RWPE1 (cell line): ENCODE measurements at regions of chr9 and their contacts with region 1.

Region 1: GRCh38 chr9:136363606-136364370 is at the start of gene DNLZ:
- DNase-seq: peak; percentile 94
- H3K27ac ChIP-seq: peak within 1 kb of the TSS; percentile 88
- CTCF ChIP-seq: peak; percentile 100

Region 2: GRCh38 chr9:136312436-136312835 is 51.4 kb before region 1 on chr9:
- CTCF ChIA-PET with region 1: interaction called, 12 read pairs
- POLR2A ChIA-PET with region 1: no interaction called
- DNase-seq: peak; percentile 90
- H3K27ac ChIP-seq: no peak overlapping the region
- CTCF ChIP-seq: peak; percentile 81

Region 3: GRCh38 chr9:136339173-136339957 is 24.4 kb before region 1 on chr9:
- CTCF ChIA-PET with region 1: interaction called, 17 read pairs
- POLR2A ChIA-PET with region 1: interaction called, 12 read pairs
- DNase-seq: peak; percentile 84
- H3K27ac ChIP-seq: peak overlapping the region; percentile 23
- CTCF ChIP-seq: peak; percentile 100

Region 4: GRCh38 chr9:136345281-136346156 is 18.3 kb before region 1 on chr9:
- CTCF ChIA-PET with region 1: interaction called, 23 read pairs
- POLR2A ChIA-PET with region 1: interaction called, 12 read pairs
- DNase-seq: no peak
- H3K27ac ChIP-seq: peak overlapping the region; percentile 84
- CTCF ChIP-seq: no peak; the same call in 1 of the 2 replicates

Region 5: GRCh38 chr9:136400038-136400834 is 36.4 kb after region 1 on chr9 and contains the start of gene SNAPC4:
- CTCF ChIA-PET with region 1: interaction called, 16 read pairs
- POLR2A ChIA-PET with region 1: interaction called, 3 read pairs
- DNase-seq: peak; percentile 95
- H3K27ac ChIP-seq: peak within 1 kb of the TSS; percentile 79
- CTCF ChIP-seq: peak; percentile 100